Posterior cingulate gyrus (tissue), 11 donors: ENCODE measurements at regions of chr15 and their contacts with region 1.

Region 1: DNA sequence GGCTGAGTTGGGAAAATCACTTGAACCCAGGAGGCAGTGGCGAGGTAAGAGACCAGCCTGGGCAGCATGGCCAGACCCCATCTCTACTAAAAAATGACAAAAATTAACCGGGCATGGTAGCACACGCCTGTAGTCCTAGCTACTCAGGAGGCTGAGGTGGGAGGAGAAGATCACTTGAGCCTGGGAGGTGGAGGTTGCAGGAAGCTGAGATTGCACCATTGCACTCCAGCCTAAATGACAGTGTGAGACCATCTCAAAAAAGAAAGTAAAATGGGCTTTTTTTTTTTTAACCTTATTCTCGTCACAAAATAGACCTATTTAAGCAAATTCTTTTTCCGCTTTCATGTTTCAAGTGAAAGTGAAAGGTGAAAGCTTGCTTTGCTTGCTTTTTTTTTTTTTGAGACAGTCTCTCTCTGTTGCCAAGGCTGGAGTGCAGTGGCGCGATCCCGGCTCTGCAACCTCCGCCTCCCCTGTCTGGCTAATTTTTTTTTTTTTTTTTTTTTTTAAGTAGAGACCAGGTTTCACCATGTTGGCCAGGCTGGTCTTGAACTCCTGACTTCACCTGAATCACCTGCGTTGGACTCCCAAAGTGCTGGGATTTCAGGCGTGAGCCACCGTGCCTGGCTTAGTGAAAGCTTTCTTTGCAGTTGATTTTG is 3.6 kb downstream of the PDIA3 start:
- DNase-seq: peak in 1 of 10 donors; percentile 36

Region 2: GRCh38 chr15:43791993-43792760 is 42.4 kb after region 1 on chr15 and contains the start of gene SERF2:
- intact Hi-C with region 1: loop called (anchors 5 kb)
- DNase-seq: peak; percentile 100

Region 3: GRCh38 chr15:44319385-44319784 is 569.6 kb after region 1 on chr15:
- intact Hi-C with region 1: no loop called
- DNase-seq: no peak